Posterior vena cava (tissue), 2 donors: ENCODE measurements at regions of chr3 and their contacts with region 1.

Region 1: DNA sequence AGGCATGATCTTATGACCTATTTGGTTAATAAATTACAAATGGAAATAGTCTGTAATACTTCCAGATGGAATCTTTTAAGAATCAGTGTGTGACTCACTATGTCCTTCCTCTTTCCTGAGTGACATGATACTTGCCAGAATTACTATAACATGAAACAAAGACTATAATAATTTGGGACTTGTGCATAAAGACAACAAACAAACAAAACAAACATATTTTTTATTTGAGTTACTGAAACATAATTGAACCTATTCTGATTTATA is 1268.1 kb downstream of the OTOL1 start:
- DNase-seq: no peak

Region 2: DNA sequence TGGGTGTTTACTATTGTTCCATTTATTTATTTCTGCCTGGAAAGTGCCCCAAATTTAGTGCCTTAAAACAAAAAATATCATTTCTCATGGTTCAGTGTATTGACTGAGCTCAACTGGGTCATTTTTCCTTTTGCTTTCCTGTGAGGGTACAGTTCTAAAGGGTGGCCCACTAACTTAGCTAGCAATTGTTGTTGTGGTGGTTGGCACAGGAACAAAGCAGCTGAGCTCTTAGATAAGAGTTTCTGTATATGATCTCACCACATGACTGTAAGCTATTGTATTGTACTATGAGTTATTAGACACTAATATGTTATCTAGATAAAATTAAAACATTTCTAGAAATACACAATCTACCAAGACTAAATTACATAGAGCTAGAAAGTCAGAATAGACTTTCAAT is 15.6 kb after region 1 on chr3:
- intact Hi-C with region 1: loop called in 1 of 2 experiments (anchors 1 kb)
- DNase-seq: no peak